Right cardiac atrium (tissue), 5 donors: ENCODE measurements at regions of chr1 and their contacts with region 1.

Region 1: DNA sequence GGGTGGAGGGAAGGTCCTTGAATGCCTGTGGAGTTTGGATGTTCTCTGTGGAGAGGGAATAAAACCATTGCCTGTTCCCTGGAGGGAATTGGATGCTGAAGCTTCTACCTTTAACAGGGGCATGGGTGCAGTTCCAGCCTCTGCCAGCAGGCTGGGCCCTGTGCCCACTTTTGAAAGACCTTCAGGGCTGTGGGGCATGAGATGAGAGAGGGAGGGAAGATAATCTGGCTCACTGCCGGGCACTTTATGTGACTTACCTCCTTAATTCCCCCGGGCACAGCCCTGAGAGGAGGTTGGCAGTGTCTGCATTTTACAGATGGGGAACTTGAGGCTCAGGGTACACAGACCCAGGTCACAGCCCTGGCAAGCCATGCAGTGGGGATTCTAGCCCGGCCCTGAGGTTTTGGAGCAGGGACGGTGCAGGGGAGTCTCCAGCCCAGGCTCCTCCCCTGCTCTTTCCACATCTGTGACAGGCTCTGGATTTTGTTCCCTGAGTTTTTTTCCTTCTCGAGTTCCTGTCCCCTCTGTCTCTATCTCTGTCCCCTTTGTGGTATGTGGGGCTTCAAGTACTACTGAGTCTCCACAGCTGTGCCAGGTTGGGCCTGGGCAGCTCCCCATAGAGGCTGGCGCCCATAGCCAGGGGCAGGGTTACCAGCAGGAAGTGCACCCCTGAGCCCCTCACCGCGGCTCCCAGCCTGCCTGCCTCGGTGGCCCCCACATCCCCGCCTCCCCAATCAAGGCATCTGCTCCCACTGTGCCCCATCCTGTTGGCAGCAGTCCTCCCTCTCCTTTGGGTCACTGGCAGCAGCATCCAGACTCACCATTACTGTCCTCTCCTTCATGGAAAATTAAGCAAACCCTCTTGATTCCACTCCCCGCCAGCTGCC is 14.0 kb upstream of the THEMIS2 start:
- DNase-seq: peak; percentile 76 to 93 (median 92)
- ATAC-seq: peak; percentile 82 to 89
- H3K4me3 ChIP-seq: no peak overlapping the region
- H3K27ac ChIP-seq: no peak overlapping the region
- H3K4me1 ChIP-seq: peaks cover 3% of the 10 kb centered on the region
- H3K27me3 ChIP-seq: no peaks in the 10 kb centered on the region

Region 2: DNA sequence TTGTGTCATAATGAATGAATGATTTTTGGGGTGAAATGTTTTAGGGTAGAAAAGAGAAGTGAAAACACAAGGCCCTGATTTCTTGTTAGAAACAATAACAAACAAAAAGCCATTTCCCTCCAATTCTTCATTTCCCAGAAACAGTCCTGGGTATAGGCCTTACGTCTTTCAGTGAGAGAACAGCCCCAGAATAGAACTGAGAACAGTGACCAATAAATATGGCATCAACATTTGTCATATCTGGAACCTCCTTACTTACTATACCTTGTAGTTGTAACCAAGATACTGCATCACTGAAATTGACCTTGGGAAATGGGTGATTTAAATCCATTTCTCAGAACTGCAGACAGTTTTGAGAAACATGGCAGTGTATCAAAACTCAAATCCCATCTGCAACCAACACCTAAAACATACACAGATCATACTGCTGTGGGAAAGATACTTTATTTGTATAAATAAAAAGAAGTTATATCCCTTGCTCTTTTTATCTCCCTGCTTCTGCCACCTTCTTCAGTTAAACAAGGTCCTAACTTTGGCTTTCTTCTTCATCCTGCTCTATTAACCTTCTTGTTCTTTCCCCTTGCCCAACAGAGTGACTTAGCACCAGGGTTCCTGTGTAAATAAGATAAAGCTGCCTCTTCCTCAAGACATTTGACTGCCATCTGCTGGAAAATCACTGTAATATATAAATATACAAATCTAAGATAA is 121.0 kb after region 1 on chr1:
- intact Hi-C with region 1: loop called (anchors 5 to 10 kb)
- DNase-seq: no peak
- ATAC-seq: peak; percentile 73 to 87
- H3K4me3 ChIP-seq: no peak overlapping the region
- H3K27ac ChIP-seq: no peak overlapping the region
- H3K4me1 ChIP-seq: no peaks in the 10 kb centered on the region
- H3K27me3 ChIP-seq: no peaks in the 10 kb centered on the region

Region 3: DNA sequence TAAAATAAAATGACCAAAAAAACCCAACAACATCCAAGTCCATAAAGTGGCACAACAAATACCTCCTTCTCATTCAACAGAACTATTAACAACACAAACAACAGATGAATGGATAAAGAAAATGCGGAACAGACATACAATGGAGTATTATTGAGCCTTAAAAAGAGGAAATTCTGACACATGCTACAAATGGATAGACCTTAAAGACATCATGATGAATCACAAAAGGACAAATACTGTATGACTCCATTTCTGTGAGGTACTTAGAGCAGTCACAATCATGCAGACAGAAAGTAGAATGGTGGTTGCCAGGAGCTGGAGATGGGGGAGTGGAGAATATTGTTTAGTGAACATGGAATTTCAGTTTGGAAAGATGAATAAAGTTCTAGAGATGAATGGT is 187.5 kb after region 1 on chr1:
- intact Hi-C with region 1: no loop called
- DNase-seq: no peak
- ATAC-seq: no peak
- H3K4me3 ChIP-seq: no peak overlapping the region
- H3K27ac ChIP-seq: no peak overlapping the region
- H3K4me1 ChIP-seq: no peaks in the 10 kb centered on the region
- H3K27me3 ChIP-seq: no peaks in the 10 kb centered on the region

Region 4: GRCh38 chr1:28208818-28209441 is 350.6 kb after region 1 on chr1:
- intact Hi-C with region 1: loop called in 1 of 4 experiments (anchors 10 kb)
- DNase-seq: peak; percentile 23 to 71 (median 57)
- ATAC-seq: peak; percentile 83 to 87
- H3K4me3 ChIP-seq: no peak overlapping the region
- H3K27ac ChIP-seq: no peak overlapping the region
- H3K4me1 ChIP-seq: no peaks in the 10 kb centered on the region
- H3K27me3 ChIP-seq: no peaks in the 10 kb centered on the region